ENCODE measurements at regions of chr6 and their contacts with region 1.

Region 1: GRCh38 chr6:144284783-144285547 is at the start of gene UTRN:
- DNase-seq: peak in 7 of 9 experiments; percentile 19 to 64 (median 28)
- ATAC-seq: peak; percentile 47
- H3K4me3 ChIP-seq: peak within 1 kb of the TSS; percentile 85 to 89
- H3K4me3 Mint-ChIP-seq: peak within 1 kb of the TSS; percentile 91
- H3K27ac ChIP-seq: peak within 1 kb of the TSS in 1 of 2 experiments; percentile 29
- H3K27ac Mint-ChIP-seq: peak within 1 kb of the TSS; percentile 41
- H3K4me1 ChIP-seq: peaks cover 8% of the 10 kb centered on the region
- H3K4me1 Mint-ChIP-seq: peaks cover 18% of the 10 kb centered on the region
- H3K27me3 ChIP-seq: no peaks in the 10 kb centered on the region
- H3K27me3 Mint-ChIP-seq: peaks cover 6% of the 10 kb centered on the region
- CTCF ChIP-seq: no peak
- total RNA-seq, gene UTRN: 125 to 130 TPM

Region 2: DNA sequence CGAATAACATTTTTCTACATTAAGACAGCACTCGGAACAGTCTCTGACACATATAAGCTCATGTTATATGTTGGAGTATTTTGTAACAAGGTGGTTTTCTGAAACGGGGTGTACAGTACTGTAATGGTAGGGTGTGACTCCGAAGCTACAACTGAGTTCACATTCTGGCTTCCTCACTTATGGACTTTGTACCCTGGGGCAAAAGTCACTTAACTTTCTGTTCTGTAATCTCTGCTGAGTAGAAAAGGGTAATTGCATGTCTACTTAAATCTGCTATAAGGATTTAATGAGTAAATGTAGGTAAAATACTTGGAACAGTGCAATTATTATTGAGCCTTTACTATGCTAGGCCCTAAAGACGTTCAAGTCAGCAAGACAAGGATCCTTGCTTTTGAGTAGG is 446.6 kb before region 1 on chr6:
- CTCF ChIA-PET with region 1: no interaction called
- POLR2A ChIA-PET with region 1: no interaction called
- intact Hi-C with region 1: no loop called
- DNase-seq: no peak
- ATAC-seq: no peak
- H3K4me3 ChIP-seq: no peak overlapping the region
- H3K4me3 Mint-ChIP-seq: no peak overlapping the region
- H3K27ac ChIP-seq: no peak overlapping the region
- H3K27ac Mint-ChIP-seq: no peak overlapping the region
- H3K4me1 ChIP-seq: no peaks in the 10 kb centered on the region
- H3K4me1 Mint-ChIP-seq: peaks cover 5% of the 10 kb centered on the region
- H3K27me3 ChIP-seq: no peaks in the 10 kb centered on the region
- H3K27me3 Mint-ChIP-seq: no peaks in the 10 kb centered on the region
- CTCF ChIP-seq: no peak

Region 3: GRCh38 chr6:144104898-144105487 is 180.0 kb before region 1 on chr6:
- CTCF ChIA-PET with region 1: no interaction called
- POLR2A ChIA-PET with region 1: no interaction called
- intact Hi-C with region 1: loop called in 1 of 2 experiments (anchors 5 kb)
- DNase-seq: peak in 5 of 9 experiments; percentile 16 to 83 (median 45)
- ATAC-seq: peak; percentile 78
- H3K4me3 ChIP-seq: no peak overlapping the region
- H3K4me3 Mint-ChIP-seq: no peak overlapping the region
- H3K27ac ChIP-seq: no peak overlapping the region
- H3K27ac Mint-ChIP-seq: no peak overlapping the region
- H3K4me1 ChIP-seq: no peaks in the 10 kb centered on the region
- H3K4me1 Mint-ChIP-seq: peaks cover 2% of the 10 kb centered on the region
- H3K27me3 ChIP-seq: no peaks in the 10 kb centered on the region
- H3K27me3 Mint-ChIP-seq: no peaks in the 10 kb centered on the region
- CTCF ChIP-seq: peak; percentile 79

Region 4: GRCh38 chr6:144349690-144350527 is 64.9 kb after region 1 on chr6:
- CTCF ChIA-PET with region 1: interaction called, 8 read pairs
- POLR2A ChIA-PET with region 1: interaction called, 3 read pairs
- intact Hi-C with region 1: loop called in 1 of 2 experiments (anchors 1 kb)
- DNase-seq: peak in 2 of 9 experiments; percentile 52 to 67
- ATAC-seq: peak; percentile 53
- H3K4me3 ChIP-seq: peak overlapping the region; percentile 8 to 29
- H3K4me3 Mint-ChIP-seq: peak overlapping the region; percentile 74
- H3K27ac ChIP-seq: peak overlapping the region; percentile 40 to 88
- H3K27ac Mint-ChIP-seq: peak overlapping the region; percentile 93
- H3K4me1 ChIP-seq: peaks cover 81% of the 10 kb centered on the region
- H3K4me1 Mint-ChIP-seq: peaks cover 90% of the 10 kb centered on the region
- H3K27me3 ChIP-seq: no peaks in the 10 kb centered on the region
- H3K27me3 Mint-ChIP-seq: no peaks in the 10 kb centered on the region
- CTCF ChIP-seq: no peak

Region 5: DNA sequence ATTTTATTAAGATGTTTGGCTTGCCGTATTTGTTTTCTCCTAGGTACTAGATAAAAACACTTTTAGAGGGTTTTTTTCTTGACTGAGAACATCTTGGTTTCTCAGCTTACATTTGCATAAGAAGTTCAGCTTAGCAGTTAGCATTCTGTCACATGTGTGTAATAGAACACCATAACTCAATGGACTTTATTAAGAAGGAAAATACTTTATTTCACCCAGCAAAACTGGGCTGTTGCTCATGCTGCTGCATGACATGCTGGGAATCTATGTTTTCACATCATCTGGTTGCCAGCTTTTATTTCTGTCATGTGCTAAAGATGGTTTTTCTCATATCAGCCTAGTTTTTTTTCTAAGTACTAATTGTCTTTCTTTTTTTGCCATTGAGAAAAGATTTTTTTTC is 144.8 kb after region 1 on chr6:
- CTCF ChIA-PET with region 1: no interaction called
- POLR2A ChIA-PET with region 1: no interaction called
- intact Hi-C with region 1: loop called in 1 of 2 experiments (anchors 5 kb)
- DNase-seq: no peak
- ATAC-seq: no peak
- H3K4me3 ChIP-seq: no peak overlapping the region
- H3K4me3 Mint-ChIP-seq: no peak overlapping the region
- H3K27ac ChIP-seq: no peak overlapping the region
- H3K27ac Mint-ChIP-seq: no peak overlapping the region
- H3K4me1 ChIP-seq: no peaks in the 10 kb centered on the region
- H3K4me1 Mint-ChIP-seq: peaks cover 7% of the 10 kb centered on the region
- H3K27me3 ChIP-seq: no peaks in the 10 kb centered on the region
- H3K27me3 Mint-ChIP-seq: no peaks in the 10 kb centered on the region
- CTCF ChIP-seq: no peak

Region 6: DNA sequence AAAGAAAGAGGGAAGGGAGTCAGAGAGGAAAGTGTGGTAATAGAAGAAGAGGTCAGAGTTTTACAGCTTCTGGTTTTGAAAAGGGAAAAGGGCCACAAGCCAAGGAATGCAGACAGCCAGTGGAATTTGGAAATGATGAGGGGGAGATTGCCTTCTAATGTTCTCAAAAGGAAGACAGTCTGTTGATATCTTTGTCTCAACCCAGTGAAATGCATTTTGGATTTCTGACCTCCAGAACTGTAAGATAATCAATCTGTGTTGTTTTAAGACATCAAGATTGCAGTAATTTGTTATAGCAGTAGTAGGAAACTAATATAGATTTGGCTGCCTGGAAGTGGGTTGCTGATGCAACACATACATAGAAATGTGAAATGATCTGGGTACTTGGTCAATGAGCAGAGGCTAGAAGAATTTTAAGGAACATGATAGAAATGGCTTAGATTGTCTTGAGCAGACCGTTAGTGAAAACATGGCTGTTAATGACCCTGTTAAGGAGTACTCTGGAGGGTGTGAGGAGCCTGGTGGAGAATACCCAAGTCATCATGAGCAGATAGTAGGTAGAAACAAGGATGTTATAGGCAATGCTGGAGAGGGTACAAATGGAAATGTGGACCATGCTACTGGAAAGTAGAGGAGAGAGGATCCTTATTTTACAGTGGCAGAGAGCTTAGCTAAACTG is 2002.9 kb after region 1 on chr6:
- CTCF ChIA-PET with region 1: no interaction called
- POLR2A ChIA-PET with region 1: no interaction called
- intact Hi-C with region 1: no loop called
- DNase-seq: no peak
- ATAC-seq: no peak
- H3K4me3 ChIP-seq: no peak overlapping the region
- H3K4me3 Mint-ChIP-seq: no peak overlapping the region
- H3K27ac ChIP-seq: no peak overlapping the region
- H3K27ac Mint-ChIP-seq: no peak overlapping the region
- H3K4me1 ChIP-seq: no peaks in the 10 kb centered on the region
- H3K4me1 Mint-ChIP-seq: no peaks in the 10 kb centered on the region
- H3K27me3 ChIP-seq: no peaks in the 10 kb centered on the region
- H3K27me3 Mint-ChIP-seq: peaks cover 2% of the 10 kb centered on the region
- CTCF ChIP-seq: no peak

Measured in CD8-positive, alpha-beta T cell (primary cell).